Activated naive CD4-positive, alpha-beta T cell treated with anti-CD3 and anti-CD28 coated beads, Interleukin-2, amount 10 ng/mL, durations not matched to agents 7 days and 5 days (primary cell): ENCODE measurements at regions of chr2 and their contacts with region 1.

Region 1: GRCh38 chr2:65264821-65265670 is 37.4 kb downstream of the ACTR2 start:
- DNase-seq: peak; percentile 27
- H3K4me3 Mint-ChIP-seq: no peak overlapping the region
- H3K27ac Mint-ChIP-seq: no peak overlapping the region
- H3K4me1 Mint-ChIP-seq: peaks cover 5% of the 10 kb centered on the region
- H3K27me3 Mint-ChIP-seq: no peaks in the 10 kb centered on the region

Region 2: DNA sequence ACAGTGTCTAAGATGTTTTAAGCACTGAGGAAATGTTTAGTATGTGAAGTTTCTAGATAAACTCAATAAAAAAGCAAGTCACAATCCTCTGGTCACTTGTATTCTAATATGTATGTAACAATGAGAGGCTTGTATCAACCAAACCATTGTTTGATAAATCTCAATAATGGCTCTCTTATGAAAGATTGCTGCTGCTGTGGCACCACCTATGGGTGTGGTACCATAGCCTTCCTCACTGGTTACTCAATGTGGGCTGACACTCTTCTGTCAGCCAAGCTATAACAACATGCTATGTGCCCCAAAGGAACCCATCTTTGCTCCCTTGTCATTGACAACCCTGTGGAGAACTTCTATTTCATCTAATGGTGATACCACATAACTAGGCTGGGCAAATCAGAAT is 122.5 kb before region 1 on chr2:
- CTCF ChIA-PET with region 1: no interaction called
- DNase-seq: no peak
- H3K4me3 Mint-ChIP-seq: no peak overlapping the region
- H3K27ac Mint-ChIP-seq: no peak overlapping the region
- H3K4me1 Mint-ChIP-seq: no peaks in the 10 kb centered on the region
- H3K27me3 Mint-ChIP-seq: peaks cover 32% of the 10 kb centered on the region

Region 3: GRCh38 chr2:65576861-65577601 is 312.0 kb after region 1 on chr2:
- CTCF ChIA-PET with region 1: interaction called, 10 read pairs
- DNase-seq: no peak
- H3K4me3 Mint-ChIP-seq: no peak overlapping the region
- H3K27ac Mint-ChIP-seq: no peak overlapping the region
- H3K4me1 Mint-ChIP-seq: peaks cover 3% of the 10 kb centered on the region
- H3K27me3 Mint-ChIP-seq: peaks cover 41% of the 10 kb centered on the region